ENCODE measurements at regions of chr10 and their contacts with region 1.

Region 1: GRCh38 chr10:5014936-5015335 is 11.3 kb upstream of the AKR1C2 start:
- DNase-seq: peak in 2 of 6 donors; percentile 32 to 39
- ATAC-seq: peak; percentile 77 to 91 (median 85)
- H3K4me3 ChIP-seq: no peak overlapping the region
- H3K27ac ChIP-seq: no peak overlapping the region
- H3K4me1 ChIP-seq: no peaks in the 10 kb centered on the region
- H3K27me3 ChIP-seq: no peaks in the 10 kb centered on the region
- CTCF ChIP-seq: peak in 3 of 4 donors; percentile 6 to 29 (median 7)

Region 2: GRCh38 chr10:5147255-5147980 is 132.5 kb after region 1 on chr10:
- intact Hi-C with region 1: no loop called
- DNase-seq: peak in 5 of 6 donors; percentile 22 to 79 (median 69)
- ATAC-seq: peak; percentile 83 to 94 (median 92)
- H3K4me3 ChIP-seq: no peak overlapping the region
- H3K27ac ChIP-seq: peak overlapping the region; percentile 53 to 90 (median 72)
- H3K4me1 ChIP-seq: peaks cover 17 to 35% (median 31%) of the 10 kb centered on the region in 3 donors
- H3K27me3 ChIP-seq: no peaks in the 10 kb centered on the region
- CTCF ChIP-seq: no peak

Region 3: DNA sequence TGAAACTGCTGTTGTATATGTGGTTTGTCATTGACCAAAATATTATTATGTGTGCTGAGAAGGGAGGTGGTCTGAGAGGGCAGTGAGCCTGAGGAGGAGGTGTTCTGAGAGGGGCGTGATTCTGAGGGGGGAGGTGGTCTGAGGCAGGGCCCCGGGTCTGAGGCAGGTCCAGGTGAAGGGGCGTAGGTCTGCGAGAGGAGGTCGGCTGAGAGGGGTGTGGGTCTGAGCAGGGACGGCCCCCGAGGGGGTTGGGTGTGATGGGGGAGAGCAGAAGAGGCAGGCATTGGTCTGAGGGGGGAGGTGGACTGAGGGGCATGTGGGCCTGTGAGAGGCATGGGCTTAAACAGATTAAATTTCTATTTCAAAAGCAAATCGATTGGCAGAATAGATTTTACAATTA is 214.1 kb after region 1 on chr10:
- intact Hi-C with region 1: no loop called
- DNase-seq: no peak
- ATAC-seq: no peak
- H3K4me3 ChIP-seq: no peak overlapping the region
- H3K27ac ChIP-seq: no peak overlapping the region
- H3K4me1 ChIP-seq: no peaks in the 10 kb centered on the region
- H3K27me3 ChIP-seq: no peaks in the 10 kb centered on the region
- CTCF ChIP-seq: no peak

Region 4: DNA sequence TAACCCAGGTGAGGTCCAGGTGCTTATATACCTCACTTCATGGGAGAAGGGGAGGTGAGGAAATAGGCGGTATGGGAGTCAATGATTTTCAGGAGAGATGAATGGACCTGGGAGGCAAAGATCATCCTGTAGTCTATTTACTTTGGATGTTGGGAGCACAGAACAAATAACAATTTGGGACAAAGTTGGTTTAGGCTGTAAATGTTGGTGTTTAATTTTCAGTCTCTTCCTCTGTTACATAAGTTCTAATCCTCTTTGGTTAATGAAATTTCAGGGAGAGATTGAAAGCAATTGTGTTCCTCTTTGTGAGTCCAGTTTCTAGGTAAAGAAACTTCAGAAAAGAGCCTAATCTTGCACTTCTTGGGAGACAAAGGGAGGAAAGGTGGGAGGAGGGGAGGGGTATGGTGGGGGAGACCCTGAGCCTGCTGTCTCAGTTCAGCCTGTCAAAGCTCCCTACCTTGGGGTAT is 228.6 kb after region 1 on chr10:
- intact Hi-C with region 1: no loop called
- DNase-seq: no peak
- ATAC-seq: no peak
- H3K4me3 ChIP-seq: no peak overlapping the region
- H3K27ac ChIP-seq: no peak overlapping the region
- H3K4me1 ChIP-seq: no peaks in the 10 kb centered on the region
- H3K27me3 ChIP-seq: no peaks in the 10 kb centered on the region
- CTCF ChIP-seq: no peak

Region 5: DNA sequence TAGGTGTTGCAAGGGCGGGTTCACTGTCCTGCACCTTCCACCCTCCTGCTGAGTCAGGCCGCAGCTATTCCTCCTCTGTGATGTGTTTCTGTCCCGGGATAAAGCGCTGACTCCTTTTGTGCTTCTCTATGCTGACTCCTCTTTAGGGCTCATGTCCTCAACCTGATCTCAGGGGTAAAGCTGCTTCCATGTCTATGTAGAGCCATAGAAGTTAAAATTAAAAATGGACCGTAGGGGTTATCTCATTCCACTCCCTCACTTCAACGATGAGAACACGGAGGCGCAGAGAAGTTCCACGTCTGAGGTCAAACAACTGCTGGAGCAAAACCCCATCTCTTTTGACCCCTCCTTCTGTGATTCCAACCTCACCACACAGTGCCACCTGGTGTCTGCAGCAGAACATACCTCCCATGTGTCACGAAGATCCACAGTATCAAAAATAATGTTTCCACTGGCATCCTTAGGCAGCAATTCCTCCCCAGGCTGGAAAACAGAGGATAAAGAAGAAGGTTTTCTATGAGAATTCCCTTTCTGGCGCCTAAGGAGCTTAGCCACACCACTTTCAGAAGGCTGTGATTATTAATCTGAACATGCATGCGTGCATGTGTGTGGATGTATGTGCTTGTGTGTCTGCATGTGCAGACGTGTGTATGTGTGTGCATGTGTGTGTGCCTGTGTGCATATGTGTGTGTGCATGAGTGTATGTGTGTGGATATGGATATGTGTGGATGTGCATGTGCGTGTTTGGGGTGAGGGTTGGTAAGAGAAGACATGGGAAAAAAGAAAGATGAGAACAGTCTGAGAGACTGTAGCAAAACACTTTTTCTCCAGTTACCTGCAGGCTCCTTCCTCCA is 268.6 kb after region 1 on chr10:
- intact Hi-C with region 1: loop called in 2 of 3 experiments (anchors 10 kb)
- DNase-seq: peak; percentile 44 to 77 (median 60)
- ATAC-seq: peak; percentile 96 to 99 (median 98)
- H3K4me3 ChIP-seq: no peak overlapping the region
- H3K27ac ChIP-seq: no peak overlapping the region
- H3K4me1 ChIP-seq: no peaks in the 10 kb centered on the region
- H3K27me3 ChIP-seq: peaks cover 0 to 5% (median 0%) of the 10 kb centered on the region in 4 donors
- CTCF ChIP-seq: peak; percentile 46 to 62 (median 55)

Measured in pancreas (tissue), 10 donors.